ENCODE measurements at regions of chr22 and their contacts with region 1.

Region 1: DNA sequence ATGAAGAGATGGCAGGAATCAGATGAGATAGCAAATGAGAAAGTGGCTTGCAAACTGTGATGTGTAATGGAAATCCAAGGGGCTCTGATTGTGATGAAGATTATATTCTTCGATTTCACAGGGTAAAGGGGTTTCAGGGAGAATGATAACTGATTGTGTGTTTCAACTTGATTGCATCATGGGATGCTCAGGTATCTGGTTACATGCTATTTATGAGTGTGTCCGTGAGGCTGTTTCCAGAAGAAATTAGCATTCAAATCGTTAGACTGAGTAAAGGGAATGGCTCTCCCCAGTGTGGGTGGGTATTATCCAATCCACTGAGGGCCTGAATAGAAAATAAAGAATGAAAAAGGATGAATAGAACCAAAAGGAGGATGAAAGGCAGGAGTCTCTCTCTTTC is 278.7 kb upstream of the LARGE1 start:
- DNase-seq: no peak
- ATAC-seq: no peak
- H3K4me3 ChIP-seq: no peak overlapping the region
- H3K27ac ChIP-seq: no peak overlapping the region
- H3K4me1 ChIP-seq: no peaks in the 10 kb centered on the region
- H3K27me3 ChIP-seq: peaks cover 3% of the 10 kb centered on the region

Region 2: DNA sequence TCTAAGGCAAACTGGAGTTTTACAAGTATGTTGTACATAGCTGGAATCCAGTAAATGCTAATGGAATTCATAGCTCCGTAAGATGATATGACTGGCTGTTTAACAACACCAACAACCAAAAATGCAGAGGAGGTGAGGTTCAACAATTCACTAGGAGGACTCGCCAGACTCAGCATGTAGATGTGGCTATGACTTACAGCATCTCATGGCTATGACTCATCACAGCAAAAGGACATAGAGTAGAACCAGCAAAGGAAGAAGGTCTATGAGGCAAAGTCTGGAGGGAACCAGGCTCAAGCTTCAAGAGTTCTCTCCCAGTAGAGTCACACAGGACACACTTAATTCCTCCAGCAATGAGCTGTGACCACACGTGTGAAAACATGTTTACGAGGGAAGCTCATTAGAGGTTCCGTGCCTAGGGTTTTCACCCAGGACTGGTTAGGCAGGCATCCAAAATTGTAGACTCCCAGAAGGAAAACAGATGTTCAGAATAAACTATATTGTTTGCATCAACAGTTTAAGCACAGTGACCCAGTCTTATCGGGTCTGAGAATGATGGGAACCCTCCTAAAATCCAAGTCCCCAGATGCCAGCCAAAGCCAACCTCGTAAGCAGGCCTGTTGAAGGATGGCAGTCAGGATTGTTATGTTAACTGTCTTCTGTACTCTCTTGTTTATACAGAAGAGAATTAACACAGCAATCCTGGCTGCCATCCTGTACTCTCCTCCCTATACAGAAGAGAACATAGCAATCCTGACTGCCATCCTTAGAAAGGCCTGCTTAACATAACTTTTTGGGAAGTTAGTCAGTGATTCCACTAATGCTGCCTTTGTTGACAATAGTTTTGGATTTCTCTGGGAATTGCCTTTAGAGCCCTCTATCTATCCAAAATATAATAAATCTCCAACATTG is 395.3 kb before region 1 on chr22:
- intact Hi-C with region 1: no loop called
- DNase-seq: no peak
- ATAC-seq: peak in 1 of 2 donors; percentile 62
- H3K4me3 ChIP-seq: no peak overlapping the region
- H3K27ac ChIP-seq: no peak overlapping the region
- H3K4me1 ChIP-seq: no peaks in the 10 kb centered on the region
- H3K27me3 ChIP-seq: no peaks in the 10 kb centered on the region

Region 3: DNA sequence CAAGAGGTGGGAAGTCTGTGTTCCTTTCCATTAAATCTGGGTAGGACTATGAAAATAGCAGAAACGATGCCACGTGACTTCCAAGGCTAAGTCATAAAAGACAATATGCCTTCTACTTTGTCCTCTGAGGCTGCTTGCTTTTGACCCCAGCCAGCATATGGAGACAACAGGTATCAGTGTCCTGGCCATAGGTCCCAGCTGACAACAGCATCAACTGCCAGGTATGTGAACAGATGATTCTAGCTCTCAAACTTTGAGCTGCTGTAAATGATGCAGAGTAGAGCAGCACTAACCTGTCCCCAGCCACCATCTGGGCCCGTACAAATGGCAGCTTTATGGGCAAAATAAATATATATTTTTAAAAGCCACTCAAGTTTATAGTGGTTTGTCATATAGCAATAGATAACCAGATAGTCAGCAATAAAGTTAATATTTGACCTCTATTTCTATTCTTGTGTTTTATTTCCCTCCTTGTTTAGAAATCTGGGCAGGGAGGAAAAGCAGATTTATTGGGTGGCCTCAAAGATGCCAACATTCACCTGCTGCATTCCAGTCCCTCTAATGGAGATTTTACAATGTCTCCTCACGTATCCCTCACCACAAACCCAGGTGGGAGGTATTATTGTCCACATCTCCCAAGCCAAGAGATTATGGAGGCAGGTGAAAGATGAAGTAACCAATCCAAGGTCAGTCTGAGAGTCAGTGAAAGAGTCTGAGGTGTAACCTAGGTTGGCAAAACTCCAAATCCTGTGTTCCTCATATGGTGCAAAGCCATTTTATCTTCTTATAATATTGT is 69.1 kb before region 1 on chr22:
- intact Hi-C with region 1: loop called in 1 of 4 experiments (anchors 10 kb)
- DNase-seq: no peak
- ATAC-seq: no peak
- H3K4me3 ChIP-seq: no peak overlapping the region
- H3K27ac ChIP-seq: no peak overlapping the region
- H3K4me1 ChIP-seq: no peaks in the 10 kb centered on the region
- H3K27me3 ChIP-seq: no peaks in the 10 kb centered on the region